ENCODE measurements at regions of chr7 and their contacts with region 1.

Region 1: DNA sequence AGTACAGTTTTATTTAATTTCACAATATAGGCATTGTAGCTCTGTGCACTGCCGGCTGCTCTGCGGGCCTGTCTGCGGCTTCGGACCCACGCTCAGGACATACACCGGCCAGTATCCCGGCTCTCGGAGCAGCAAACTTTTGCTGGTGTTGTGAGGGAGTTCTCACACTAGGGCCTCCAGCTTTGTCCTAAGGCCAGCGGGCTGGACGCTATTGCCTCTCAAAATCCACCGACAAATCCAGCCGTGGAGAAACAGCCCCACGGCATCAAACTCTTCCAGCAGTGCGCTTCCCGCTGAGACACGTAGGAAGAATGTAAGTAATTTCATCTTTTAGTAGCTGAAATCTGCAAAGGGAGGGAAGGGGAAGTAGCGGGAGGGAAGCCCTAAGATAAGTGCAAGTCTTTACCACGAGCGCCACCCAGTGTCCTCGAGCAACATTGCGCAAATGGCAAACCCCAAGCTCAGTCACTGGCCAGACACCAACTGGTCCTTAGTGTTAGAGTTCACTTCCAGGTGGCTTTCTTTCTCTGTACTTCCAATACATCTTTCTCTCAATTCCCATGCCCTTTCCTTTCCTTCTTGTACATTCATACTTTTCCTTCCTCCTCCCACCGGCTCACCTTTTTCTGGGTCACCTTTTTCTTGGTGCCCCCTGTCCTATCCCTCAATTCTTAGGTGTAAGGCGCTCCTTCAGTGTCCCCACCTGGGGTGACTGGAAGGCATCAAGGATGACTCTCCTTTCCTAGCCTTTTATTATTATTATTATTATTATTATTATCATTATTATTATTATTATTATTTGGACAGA is 3.0 kb upstream of the DLX5 start:
- DNase-seq: peak; percentile 69
- H3K4me3 Mint-ChIP-seq: peak overlapping the region; percentile 66
- H3K27ac Mint-ChIP-seq: no peak overlapping the region
- H3K4me1 Mint-ChIP-seq: peaks cover 12% of the 10 kb centered on the region
- H3K27me3 Mint-ChIP-seq: peaks cover 41% of the 10 kb centered on the region
- CTCF ChIP-seq: peak; percentile 76

Region 2: DNA sequence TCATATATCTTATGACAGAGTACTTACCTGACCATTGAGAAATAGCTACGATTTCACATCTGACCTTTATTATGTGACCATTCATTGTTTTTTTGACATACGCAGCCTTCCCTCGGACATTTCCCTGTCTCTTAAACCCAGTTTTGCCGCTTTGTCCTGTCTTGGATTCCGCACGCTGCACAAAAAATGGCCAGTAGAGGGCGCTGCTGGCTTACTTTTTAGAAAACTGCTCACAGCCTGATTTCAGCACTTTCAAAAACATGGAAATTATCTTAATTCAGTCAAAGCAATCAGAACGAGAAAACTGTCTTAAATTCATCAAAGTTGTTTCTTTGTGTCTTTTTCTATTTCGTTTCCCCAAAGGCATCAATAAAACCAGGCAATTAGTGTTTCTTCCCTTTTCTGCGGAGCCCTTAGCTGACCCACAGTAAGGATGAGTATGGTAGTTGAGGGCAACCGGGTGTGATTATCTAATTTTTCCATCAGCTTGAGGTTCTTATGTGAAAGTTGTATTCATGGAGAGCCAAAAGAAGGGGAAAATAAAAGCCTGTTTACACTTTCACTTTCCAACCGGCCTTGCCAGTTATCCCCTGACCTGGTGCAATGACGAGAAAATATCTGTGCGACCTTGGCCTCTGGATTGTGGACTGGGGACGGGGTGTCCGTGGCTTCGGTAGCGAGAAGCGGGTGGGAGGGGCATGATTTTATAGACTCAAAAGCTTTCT is 1110.9 kb before region 1 on chr7:
- CTCF ChIA-PET with region 1: interaction called, 4 read pairs
- intact Hi-C with region 1: loop called (anchors 2 kb)
- DNase-seq: peak; percentile 58
- H3K4me3 Mint-ChIP-seq: peak overlapping the region; percentile 28
- H3K27ac Mint-ChIP-seq: no peak overlapping the region
- H3K4me1 Mint-ChIP-seq: peaks cover 7% of the 10 kb centered on the region
- H3K27me3 Mint-ChIP-seq: peaks cover 18% of the 10 kb centered on the region
- CTCF ChIP-seq: peak; percentile 67

Region 3: DNA sequence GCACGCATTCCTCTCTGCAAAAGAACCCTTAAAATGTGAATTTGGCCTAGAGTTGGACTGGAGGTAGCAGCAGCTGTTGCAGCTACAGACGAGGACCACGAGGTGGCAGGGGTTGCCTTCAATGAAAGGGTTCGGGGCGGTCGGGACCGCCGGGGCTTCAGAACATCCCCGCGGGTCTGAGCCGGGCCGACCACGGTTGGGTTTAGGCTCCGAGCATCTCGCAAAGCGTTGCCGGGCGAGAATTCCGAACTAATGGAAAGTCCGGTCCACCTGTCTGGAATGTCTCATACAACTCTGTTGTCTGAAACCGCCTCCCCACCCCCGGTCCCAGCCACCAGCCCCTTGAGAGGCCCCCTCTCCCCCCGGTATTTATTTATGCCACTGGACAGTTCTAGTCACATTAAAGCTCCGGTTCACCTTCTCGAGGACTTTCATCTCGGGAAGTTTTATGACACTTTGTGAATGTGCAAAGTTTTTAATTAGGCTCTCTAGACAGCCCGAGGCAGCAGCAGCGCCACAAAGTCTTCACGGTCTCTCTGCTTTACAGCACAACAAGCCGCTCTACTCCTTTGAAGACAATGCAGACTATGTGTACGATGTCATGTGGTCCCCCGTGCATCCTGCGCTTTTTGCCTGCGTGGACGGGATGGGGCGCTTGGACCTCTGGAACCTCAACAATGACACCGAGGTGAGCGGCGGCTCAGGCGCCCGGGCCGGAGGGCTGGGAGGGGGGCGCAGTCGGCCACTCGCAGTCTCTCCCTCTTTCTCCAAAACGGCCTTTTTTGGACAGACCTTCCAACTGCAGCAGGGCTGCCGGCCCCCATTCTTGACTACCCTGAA is 951.9 kb before region 1 on chr7:
- CTCF ChIA-PET with region 1: interaction called, 4 read pairs
- intact Hi-C with region 1: loop called (anchors 1 kb)
- DNase-seq: peak; percentile 53
- H3K4me3 Mint-ChIP-seq: peak overlapping the region; percentile 72
- H3K27ac Mint-ChIP-seq: no peak overlapping the region
- H3K4me1 Mint-ChIP-seq: peaks cover 20% of the 10 kb centered on the region
- H3K27me3 Mint-ChIP-seq: no peaks in the 10 kb centered on the region
- CTCF ChIP-seq: peak; percentile 71

Region 4: DNA sequence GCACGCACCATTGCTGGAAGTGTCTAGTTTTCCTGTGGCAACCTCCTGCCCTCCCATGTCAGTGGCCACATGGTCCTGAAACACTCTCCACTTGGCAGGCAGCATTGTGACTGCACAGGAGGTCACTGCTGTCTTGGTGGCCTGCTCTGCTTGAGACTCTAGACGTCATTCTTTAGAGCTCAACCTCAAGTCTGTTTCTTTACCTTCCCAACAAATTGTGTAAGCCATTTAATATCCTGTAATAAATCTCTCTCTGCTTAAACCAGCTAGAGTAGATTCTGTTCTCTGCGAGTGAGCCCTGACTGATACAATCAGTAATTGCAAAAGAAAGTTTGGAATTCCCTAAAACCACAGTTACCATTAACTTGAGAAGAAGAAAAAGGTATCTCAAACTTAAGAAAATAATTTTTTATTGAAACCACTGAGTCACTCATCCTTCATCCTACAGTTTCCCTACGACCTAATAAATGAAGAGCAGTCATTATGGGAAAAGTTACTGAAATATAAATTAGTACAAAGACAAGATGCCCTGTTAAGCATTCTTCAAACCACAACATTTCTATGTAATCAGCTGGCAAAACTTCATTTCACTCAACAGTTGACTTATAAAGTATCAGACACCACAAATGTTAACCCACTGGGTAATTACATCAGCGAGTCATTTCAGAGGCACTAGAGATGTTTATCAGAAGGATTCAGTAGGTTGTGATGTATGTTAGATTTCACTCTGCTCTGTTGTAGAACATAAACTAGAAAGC is 723.8 kb before region 1 on chr7:
- CTCF ChIA-PET with region 1: no interaction called
- intact Hi-C with region 1: loop called (anchors 2 kb)
- DNase-seq: no peak
- H3K4me3 Mint-ChIP-seq: no peak overlapping the region
- H3K27ac Mint-ChIP-seq: peak overlapping the region; percentile 58
- H3K4me1 Mint-ChIP-seq: peaks cover 49% of the 10 kb centered on the region
- H3K27me3 Mint-ChIP-seq: no peaks in the 10 kb centered on the region
- CTCF ChIP-seq: no peak

Region 5: GRCh38 chr7:96414931-96415292 is 612.7 kb before region 1 on chr7:
- CTCF ChIA-PET with region 1: no interaction called
- intact Hi-C with region 1: loop called (anchors 2 kb)
- DNase-seq: peak; percentile 44
- H3K4me3 Mint-ChIP-seq: no peak overlapping the region
- H3K27ac Mint-ChIP-seq: no peak overlapping the region
- H3K4me1 Mint-ChIP-seq: peaks cover 11% of the 10 kb centered on the region
- H3K27me3 Mint-ChIP-seq: no peaks in the 10 kb centered on the region
- CTCF ChIP-seq: peak; percentile 38

Region 6: GRCh38 chr7:96596120-96596826 is 431.4 kb before region 1 on chr7:
- CTCF ChIA-PET with region 1: interaction called, 4 read pairs
- intact Hi-C with region 1: loop called (anchors 2 kb)
- DNase-seq: no peak
- H3K4me3 Mint-ChIP-seq: no peak overlapping the region
- H3K27ac Mint-ChIP-seq: no peak overlapping the region
- H3K4me1 Mint-ChIP-seq: no peaks in the 10 kb centered on the region
- H3K27me3 Mint-ChIP-seq: peaks cover 25% of the 10 kb centered on the region
- CTCF ChIP-seq: peak; percentile 23

Region 7: DNA sequence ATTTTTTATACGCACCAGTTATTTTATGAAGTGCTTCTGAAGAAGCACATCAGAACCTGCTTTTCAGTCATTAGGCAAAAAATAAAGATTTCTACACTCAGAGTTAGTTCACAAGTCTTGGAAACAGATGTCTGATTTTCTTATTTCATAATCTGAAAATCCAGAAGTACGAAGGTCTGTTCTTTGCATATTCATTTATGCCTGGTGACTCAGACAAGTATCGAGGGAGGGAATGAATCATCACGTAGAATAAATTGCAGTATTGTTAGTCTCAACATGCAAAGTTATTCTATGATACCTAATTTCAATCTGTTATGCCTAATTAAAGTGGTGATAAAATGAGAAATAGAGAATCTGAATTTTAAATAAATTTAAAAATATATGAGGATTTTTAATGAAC is 204.4 kb before region 1 on chr7:
- CTCF ChIA-PET with region 1: no interaction called
- intact Hi-C with region 1: no loop called
- DNase-seq: no peak
- H3K4me3 Mint-ChIP-seq: no peak overlapping the region
- H3K27ac Mint-ChIP-seq: peak overlapping the region; percentile 30
- H3K4me1 Mint-ChIP-seq: no peaks in the 10 kb centered on the region
- H3K27me3 Mint-ChIP-seq: no peaks in the 10 kb centered on the region
- CTCF ChIP-seq: no peak